Activated naive CD4-positive, alpha-beta T cell treated with anti-CD3 and anti-CD28 coated beads for 36 hours (primary cell): ENCODE measurements at regions of chr2 and their contacts with region 1.

Region 1: DNA sequence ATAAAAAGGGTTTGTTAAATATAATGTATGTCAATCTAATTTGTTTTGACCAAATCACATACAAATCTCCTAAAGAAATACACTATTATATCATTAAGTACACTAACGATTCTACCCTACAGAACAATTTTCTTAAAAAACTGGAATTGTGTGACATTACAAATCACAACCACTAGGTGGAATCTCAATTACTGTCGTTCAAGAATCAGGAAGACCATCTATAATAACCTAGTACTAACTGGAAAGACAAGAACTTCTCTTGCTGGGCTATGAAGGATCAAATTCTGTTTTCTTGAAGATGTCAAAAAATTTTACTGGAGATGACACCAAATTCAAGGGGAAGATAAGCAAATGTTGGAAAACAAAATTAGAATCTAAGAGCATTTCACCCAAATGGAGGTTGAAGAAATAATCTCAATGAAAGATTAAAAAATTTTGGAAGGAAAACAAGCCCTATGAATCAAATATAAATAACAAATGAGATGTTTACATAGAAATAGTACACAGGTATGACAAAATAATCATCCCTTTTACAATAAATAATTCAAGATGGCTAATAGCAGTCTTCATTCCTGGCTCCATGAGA is 110.9 kb downstream of the STK39 start:
- DNase-seq: no peak
- H3K4me3 Mint-ChIP-seq: no peak overlapping the region
- H3K27ac Mint-ChIP-seq: peak overlapping the region; percentile 44
- H3K4me1 Mint-ChIP-seq: peaks cover 15% of the 10 kb centered on the region
- H3K27me3 Mint-ChIP-seq: no peaks in the 10 kb centered on the region

Region 2: DNA sequence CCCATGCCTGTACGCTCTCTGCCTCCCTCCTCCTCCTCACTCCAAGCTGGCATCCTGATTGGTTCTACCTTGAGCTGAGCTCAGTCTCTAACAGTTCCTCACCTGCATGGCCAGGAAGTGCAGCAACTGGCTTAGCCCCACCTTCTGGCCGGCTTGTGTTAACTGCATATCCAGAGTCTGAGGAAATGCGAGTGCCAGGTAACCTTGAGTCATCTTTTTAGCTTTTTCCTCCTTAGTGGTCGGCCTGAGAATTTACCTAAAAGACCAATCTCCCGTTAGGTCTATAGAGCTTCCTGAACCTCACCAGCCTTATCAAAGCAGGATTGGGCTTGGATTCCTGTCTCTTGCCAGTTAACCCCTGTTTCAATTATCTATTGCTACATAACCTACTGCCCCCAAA is 200.4 kb after region 1 on chr2:
- CTCF ChIA-PET with region 1: interaction called, 22 read pairs
- intact Hi-C with region 1: loop called (anchors 1 kb)
- DNase-seq: peak; percentile 80
- H3K4me3 Mint-ChIP-seq: no peak overlapping the region
- H3K27ac Mint-ChIP-seq: no peak overlapping the region
- H3K4me1 Mint-ChIP-seq: peaks cover 7% of the 10 kb centered on the region
- H3K27me3 Mint-ChIP-seq: no peaks in the 10 kb centered on the region

Region 3: DNA sequence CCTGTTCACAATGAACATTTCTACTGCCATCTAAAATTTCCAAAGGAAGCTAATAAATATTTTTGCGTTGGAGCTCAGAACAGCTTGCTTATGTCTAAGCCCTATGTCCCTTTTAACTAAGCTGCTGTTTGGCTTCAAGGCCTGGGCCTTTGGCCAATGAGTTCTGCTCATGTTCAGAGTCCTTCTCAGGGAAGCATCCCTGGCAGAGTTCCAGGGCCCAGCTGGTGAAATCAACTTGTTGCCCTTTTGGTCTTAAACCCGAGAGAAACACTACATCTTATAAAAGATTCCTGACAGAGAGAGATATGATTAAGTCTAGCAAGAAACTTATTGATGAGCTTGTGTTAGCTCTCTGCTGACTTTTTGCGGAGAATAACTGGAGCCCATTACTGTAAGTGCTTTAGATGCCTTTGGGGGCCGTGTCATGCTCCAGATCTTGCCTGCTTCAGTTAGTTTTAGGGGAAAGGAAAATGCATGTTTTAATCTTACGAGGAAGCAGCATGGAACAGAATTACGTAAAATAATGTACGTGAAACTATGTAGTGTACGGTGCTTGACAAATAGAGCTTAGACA is 563.4 kb after region 1 on chr2:
- CTCF ChIA-PET with region 1: interaction called, 4 read pairs
- intact Hi-C with region 1: loop called (anchors 5 kb)
- DNase-seq: no peak
- H3K4me3 Mint-ChIP-seq: no peak overlapping the region
- H3K27ac Mint-ChIP-seq: no peak overlapping the region
- H3K4me1 Mint-ChIP-seq: no peaks in the 10 kb centered on the region
- H3K27me3 Mint-ChIP-seq: no peaks in the 10 kb centered on the region

Region 4: DNA sequence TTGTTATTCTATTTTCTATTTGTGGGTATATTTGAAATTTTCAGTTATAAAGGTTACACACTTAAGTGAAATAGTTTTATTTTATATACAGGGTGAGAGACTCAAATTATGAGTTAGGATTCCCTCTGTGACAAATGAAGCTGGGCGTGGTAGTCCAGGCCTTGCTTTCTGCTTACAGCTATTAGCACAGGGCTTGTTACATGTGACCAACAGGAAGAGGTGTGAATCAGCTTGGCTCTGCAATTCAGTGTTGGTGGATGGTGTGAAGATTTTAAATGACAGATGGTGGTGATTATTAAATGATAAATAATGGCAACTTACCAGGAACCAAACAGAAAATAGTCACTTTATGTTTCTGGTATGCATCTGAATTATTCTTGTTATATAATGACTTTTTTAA is 601.6 kb after region 1 on chr2:
- CTCF ChIA-PET with region 1: no interaction called
- intact Hi-C with region 1: no loop called
- DNase-seq: no peak
- H3K4me3 Mint-ChIP-seq: no peak overlapping the region
- H3K27ac Mint-ChIP-seq: no peak overlapping the region
- H3K4me1 Mint-ChIP-seq: no peaks in the 10 kb centered on the region
- H3K27me3 Mint-ChIP-seq: no peaks in the 10 kb centered on the region

Region 5: DNA sequence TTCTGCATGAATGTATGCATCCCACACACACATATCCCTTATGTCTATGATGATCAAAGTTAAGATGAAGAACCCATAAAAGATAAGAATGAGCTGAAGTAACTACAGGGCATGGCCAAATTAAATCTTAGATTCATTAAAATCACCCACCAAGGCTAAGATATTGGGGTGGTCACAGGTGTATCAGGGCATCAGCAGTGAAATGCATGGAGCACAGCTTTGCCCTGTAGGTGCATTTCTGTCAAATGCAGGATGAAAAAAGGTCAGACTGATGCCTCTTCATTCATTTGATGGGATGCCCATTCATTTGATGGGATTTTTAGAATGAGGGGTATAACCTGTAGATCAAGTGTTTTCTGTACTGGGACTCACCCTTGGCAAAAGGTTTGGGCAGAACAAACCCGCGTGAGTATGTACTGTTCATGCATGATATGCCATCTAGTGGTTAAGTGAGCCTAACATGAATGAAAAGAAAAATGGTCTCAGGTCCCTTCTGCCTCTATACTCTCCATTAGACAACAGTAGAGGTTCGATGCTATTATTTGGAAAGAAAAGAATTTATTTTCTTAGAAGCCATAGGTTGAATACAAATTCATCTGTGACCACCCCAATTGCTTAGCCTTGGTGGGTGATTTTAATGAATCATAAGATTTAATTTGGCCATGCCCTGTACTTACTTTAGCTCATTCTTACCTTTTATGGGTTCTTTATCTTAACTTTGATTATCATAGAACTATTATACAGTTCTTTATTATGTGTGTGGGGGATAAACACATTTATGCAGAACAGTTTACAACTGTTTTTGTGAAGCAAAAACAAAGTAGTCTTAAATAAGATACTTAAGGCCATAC is 622.7 kb after region 1 on chr2:
- CTCF ChIA-PET with region 1: no interaction called
- intact Hi-C with region 1: loop called (anchors 10 kb)
- DNase-seq: peak; percentile 41
- H3K4me3 Mint-ChIP-seq: no peak overlapping the region
- H3K27ac Mint-ChIP-seq: no peak overlapping the region
- H3K4me1 Mint-ChIP-seq: peaks cover 30% of the 10 kb centered on the region
- H3K27me3 Mint-ChIP-seq: no peaks in the 10 kb centered on the region

Region 6: DNA sequence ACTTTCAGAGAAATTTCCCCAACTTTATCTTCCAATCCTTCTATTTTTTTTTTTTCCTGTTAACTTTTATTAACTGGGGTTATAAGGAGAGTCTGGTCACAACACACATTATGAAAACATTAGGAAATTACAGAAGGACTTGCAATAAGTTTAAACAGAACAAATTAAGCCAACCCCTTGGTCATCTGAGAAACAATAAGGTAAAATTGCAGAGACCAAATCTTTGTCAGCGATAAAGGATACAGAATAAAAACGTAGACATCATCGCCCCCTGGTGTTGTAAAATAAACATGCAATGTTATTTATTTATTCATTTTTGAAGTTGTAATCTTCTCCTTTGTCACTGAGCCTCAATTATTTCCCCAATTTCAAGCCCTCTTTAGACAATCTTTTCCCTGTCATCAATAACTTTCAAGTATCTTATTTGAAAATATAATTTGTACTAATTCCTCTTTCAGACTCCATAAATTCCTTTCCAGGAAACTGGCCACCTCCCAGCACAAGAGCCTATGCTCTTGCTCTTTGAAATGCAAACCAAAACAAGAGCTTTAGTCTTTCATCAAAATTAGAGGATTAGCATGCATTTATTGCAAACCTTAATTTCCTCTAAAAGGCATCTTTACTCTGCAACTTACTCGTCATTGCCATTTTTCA is 784.1 kb after region 1 on chr2:
- CTCF ChIA-PET with region 1: no interaction called
- intact Hi-C with region 1: loop called (anchors 2 kb)
- DNase-seq: no peak
- H3K4me3 Mint-ChIP-seq: no peak overlapping the region
- H3K27ac Mint-ChIP-seq: no peak overlapping the region
- H3K4me1 Mint-ChIP-seq: peaks cover 4% of the 10 kb centered on the region
- H3K27me3 Mint-ChIP-seq: peaks cover 8% of the 10 kb centered on the region